Activated CD8-positive, alpha-beta memory T cell treated with anti-CD3 and anti-CD28 coated beads, Interleukin-2, amount 10 ng/mL, durations not matched to agents 7 days and 5 days (primary cell): ENCODE measurements at regions of chr6 and their contacts with region 1.

Region 1: GRCh38 chr6:106141441-106142237 is 55.5 kb downstream of the PRDM1 start:
- DNase-seq: peak; percentile 85
- ATAC-seq: peak; percentile 80
- H3K4me3 Mint-ChIP-seq: peak overlapping the region; percentile 29
- H3K27ac Mint-ChIP-seq: peak overlapping the region; percentile 95
- H3K4me1 Mint-ChIP-seq: peaks cover 78% of the 10 kb centered on the region
- H3K27me3 Mint-ChIP-seq: no peaks in the 10 kb centered on the region

Region 2: DNA sequence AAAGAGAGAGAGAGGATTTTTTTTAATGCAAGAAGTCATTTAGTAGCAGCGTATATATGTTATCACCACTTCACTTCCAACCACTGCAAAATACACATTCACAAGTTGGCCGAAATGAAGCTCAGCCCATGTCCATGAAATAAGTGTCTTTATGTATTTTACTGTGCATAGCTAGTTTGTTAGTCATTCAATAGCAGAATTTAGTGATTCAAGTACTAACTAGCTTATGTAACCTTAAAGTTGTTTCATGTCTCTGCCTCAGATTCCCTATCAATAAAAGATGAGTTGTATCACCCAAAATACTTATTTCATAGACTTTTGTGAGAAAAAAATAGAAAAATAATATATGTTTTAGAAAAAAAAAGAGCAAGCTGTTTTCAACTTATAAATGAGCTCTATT is 209.2 kb before region 1 on chr6:
- CTCF ChIA-PET with region 1: no interaction called
- DNase-seq: no peak
- ATAC-seq: no peak
- H3K4me3 Mint-ChIP-seq: no peak overlapping the region
- H3K27ac Mint-ChIP-seq: no peak overlapping the region
- H3K4me1 Mint-ChIP-seq: no peaks in the 10 kb centered on the region
- H3K27me3 Mint-ChIP-seq: no peaks in the 10 kb centered on the region

Region 3: DNA sequence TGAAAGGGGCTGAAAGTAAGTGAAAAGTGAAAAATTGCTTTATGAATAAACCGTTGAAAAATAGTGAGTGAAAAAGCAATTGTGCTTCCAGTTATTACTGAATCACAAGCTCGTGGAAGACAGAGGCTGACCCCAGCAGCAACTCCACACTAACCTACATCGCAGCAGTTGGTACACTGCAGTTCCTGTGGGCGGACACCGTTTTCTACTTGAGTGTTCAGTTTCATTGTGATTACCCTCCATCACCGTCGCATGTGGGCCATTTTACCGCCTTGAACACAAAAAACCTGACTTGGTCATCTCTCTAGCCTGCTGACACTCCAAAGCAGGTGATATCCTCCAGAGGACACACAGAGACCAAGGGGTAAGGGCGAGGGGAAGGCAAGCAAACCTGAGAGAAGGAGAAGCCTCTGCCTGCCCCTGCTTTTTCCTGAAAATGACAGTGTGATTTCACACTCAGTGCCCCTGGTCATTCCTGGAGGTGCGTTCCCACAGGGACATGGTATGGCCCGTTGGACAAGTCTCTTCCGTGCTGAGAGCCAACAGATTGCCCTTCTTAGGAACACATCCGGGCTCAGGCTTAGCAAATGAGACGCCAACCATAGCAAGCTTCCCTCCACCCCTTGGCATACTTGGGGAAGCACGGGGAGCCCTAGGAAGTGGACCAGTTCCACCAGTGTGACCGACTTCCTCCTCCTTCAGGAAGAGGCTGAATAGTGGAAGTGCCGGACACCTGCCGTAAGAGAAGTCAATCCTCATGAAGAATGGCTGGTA is 27.0 kb before region 1 on chr6:
- CTCF ChIA-PET with region 1: interaction called, 30 read pairs
- DNase-seq: peak; percentile 91
- ATAC-seq: peak; percentile 82
- H3K4me3 Mint-ChIP-seq: peak overlapping the region; percentile 59
- H3K27ac Mint-ChIP-seq: peak overlapping the region; percentile 96
- H3K4me1 Mint-ChIP-seq: peaks cover 92% of the 10 kb centered on the region
- H3K27me3 Mint-ChIP-seq: no peaks in the 10 kb centered on the region

Region 4: DNA sequence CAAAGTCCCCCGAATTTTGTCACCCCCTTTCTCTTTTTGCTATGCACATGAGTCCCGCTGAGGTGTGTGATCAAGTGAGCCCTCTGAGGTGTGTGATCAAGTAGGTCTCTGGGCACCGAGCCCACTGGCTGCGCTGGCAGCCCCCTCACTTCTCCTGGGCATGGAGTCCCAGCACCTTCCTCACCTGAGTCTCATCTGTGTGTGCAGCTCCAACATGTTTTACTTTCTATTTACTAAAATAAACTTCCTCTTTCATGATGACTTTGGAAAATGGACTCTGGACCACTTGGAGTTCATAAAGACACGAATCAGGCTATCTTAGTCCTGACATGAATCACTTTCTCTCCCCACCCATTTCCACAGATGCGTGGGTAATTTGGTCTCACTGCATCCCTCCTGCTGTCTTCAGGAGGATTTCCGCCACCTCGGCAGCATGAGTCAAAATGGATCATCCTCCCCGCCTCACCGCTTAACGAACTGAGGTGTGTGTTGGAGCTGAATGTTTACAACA is 15.7 kb before region 1 on chr6:
- CTCF ChIA-PET with region 1: interaction called, 13 read pairs
- DNase-seq: peak; percentile 89
- ATAC-seq: peak; percentile 89
- H3K4me3 Mint-ChIP-seq: peak overlapping the region; percentile 54
- H3K27ac Mint-ChIP-seq: peak overlapping the region; percentile 86
- H3K4me1 Mint-ChIP-seq: peaks cover 49% of the 10 kb centered on the region
- H3K27me3 Mint-ChIP-seq: no peaks in the 10 kb centered on the region

Region 5: DNA sequence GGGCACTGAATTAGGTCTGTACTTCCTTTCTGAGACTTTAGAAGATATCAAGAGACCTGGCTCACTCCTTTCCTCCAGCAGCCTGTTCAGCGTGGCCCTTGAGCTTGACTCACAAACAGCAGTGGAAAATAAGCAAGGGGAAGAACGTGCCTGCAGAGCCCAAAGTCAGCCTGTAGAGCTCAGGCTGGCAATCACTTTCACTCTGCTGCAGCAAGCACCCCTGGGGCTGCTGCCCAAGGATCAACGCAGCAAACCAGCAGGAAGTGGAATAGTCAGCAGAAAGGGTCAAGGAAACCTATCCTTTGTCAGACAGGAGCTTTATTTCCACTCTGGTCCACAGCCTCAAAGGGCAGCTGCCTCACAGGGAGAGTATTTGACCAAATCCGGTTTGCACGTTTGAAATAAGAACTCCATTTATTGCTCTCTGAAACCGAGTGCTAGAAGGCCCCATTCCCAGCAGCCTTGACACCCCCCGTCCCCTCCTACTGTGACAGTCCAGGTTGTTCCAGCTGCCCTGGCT is 21.9 kb after region 1 on chr6:
- CTCF ChIA-PET with region 1: interaction called, 46 read pairs
- DNase-seq: peak; percentile 87
- ATAC-seq: peak; percentile 62
- H3K4me3 Mint-ChIP-seq: peak overlapping the region; percentile 72
- H3K27ac Mint-ChIP-seq: peak overlapping the region; percentile 99
- H3K4me1 Mint-ChIP-seq: peaks cover 84% of the 10 kb centered on the region
- H3K27me3 Mint-ChIP-seq: no peaks in the 10 kb centered on the region

Region 6: DNA sequence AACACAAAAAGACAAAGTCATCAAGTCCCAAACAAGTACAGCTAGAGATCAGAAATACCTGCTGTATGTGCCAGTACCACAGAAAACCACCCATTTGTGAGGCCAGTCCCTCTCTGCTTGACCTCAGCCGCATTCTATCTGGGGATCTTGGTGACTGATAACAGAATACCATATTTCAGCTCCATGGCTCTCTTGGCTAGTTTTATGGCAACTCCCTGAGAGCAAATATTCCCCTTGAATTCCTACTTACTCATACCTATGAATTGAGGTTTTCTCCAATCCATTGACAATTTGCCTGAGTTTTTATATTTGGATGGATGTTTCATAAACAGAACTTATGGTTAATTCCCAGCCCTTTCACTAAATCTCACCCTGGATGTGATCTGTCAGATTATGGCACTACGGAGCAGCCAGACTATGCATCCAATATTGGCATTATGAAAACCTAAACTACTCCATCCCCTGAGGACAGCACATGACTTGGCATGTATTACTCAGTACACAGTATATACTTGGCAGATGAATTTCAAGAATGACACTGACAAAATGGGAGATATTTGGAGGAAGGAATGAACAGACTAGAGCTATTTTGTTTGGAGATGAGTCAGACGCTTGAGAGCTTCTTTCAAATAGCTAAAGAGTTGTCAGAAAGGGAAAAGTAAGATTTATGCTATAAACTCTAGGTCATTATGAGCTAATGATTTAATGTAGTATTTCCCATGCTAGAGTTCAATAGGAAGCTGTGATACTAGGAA is 40.2 kb after region 1 on chr6:
- CTCF ChIA-PET with region 1: interaction called, 16 read pairs
- DNase-seq: no peak
- ATAC-seq: peak; percentile 43
- H3K4me3 Mint-ChIP-seq: peak overlapping the region; percentile 0
- H3K27ac Mint-ChIP-seq: peak overlapping the region; percentile 67
- H3K4me1 Mint-ChIP-seq: peaks cover 52% of the 10 kb centered on the region
- H3K27me3 Mint-ChIP-seq: no peaks in the 10 kb centered on the region

Region 7: DNA sequence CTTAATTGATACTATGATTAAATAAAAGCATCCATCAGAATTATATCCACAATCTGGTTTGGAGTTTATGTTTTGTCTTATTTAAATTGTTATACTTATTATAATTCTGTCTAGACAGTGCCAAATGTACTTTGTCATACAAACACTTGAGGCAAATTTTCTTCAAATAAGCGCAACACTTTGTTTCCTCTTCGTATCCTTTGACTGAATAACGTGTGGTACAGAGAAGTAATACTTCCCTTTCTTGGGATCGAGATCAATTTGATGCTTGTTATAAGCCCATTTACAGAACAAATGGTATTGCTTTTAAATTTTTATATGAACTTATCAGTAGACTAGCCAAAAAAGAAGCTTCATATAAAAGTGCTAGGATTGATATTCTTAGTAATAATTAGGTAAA is 72.9 kb after region 1 on chr6:
- CTCF ChIA-PET with region 1: no interaction called
- DNase-seq: no peak
- ATAC-seq: no peak
- H3K4me3 Mint-ChIP-seq: no peak overlapping the region
- H3K27ac Mint-ChIP-seq: no peak overlapping the region
- H3K4me1 Mint-ChIP-seq: peaks cover 10% of the 10 kb centered on the region
- H3K27me3 Mint-ChIP-seq: no peaks in the 10 kb centered on the region

Region 8: GRCh38 chr6:106347341-106347740 is 205.7 kb after region 1 on chr6:
- CTCF ChIA-PET with region 1: no interaction called
- DNase-seq: no peak
- ATAC-seq: no peak
- H3K4me3 Mint-ChIP-seq: no peak overlapping the region
- H3K27ac Mint-ChIP-seq: no peak overlapping the region
- H3K4me1 Mint-ChIP-seq: peaks cover 4% of the 10 kb centered on the region
- H3K27me3 Mint-ChIP-seq: peaks cover 29% of the 10 kb centered on the region